BJ (cell line): ENCODE measurements at regions of chr11 and their contacts with region 1.

Region 1: DNA sequence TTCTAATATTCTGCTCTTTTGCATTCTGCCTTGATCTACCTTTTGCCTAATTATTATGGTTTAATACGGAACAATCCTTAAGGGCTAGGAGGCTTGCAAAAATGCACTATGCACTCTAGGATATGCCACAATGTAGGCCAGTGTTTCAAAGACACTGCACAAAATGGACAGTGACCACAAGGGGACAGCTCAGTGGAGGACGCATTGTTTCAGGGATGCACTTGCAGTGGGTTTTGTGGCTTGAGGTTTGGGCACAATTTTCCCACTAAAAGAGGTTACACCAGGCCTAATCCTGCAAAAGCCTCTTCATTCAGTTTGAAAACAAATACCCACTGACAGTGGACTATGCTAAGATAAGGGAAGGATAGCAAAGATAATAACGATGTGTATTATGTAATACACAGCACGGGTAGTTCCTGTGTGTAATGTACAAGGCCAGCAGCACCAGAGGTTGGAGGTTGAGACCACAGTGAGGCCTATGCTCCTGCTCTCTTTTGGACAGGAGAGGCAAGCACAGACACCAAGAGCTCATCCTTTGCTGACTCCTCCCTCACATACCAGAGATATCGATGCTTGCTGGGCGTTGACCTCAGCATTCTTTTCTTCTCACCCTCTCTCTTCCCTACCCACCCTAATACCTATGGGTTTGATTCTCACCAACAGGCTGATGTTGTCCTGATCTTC is 12.7 kb downstream of the MAP6 start:
- DNase-seq: no peak
- H3K4me3 ChIP-seq: no peak overlapping the region
- H3K27me3 ChIP-seq: no peaks in the 10 kb centered on the region
- CTCF ChIP-seq: no peak

Region 2: GRCh38 chr11:74154621-74155281 is 1501.4 kb before region 1 on chr11:
- CTCF ChIA-PET with region 1: no interaction called
- POLR2A ChIA-PET with region 1: interaction called, 10 read pairs
- DNase-seq: no peak
- H3K4me3 ChIP-seq: no peak overlapping the region
- H3K27me3 ChIP-seq: no peaks in the 10 kb centered on the region
- CTCF ChIP-seq: no peak